ENCODE measurements at regions of chr2 and their contacts with region 1.

Region 1: GRCh38 chr2:46632349-46632748 is 153.0 kb downstream of the TMEM247 start:
- DNase-seq: peak in 1 of 2 experiments; percentile 60
- H3K4me3 ChIP-seq: no peak overlapping the region
- H3K27ac ChIP-seq: no peak overlapping the region
- H3K4me1 ChIP-seq: no peaks in the 10 kb centered on the region
- H3K27me3 ChIP-seq: no peaks in the 10 kb centered on the region
- CTCF ChIP-seq: peak; percentile 85

Region 2: DNA sequence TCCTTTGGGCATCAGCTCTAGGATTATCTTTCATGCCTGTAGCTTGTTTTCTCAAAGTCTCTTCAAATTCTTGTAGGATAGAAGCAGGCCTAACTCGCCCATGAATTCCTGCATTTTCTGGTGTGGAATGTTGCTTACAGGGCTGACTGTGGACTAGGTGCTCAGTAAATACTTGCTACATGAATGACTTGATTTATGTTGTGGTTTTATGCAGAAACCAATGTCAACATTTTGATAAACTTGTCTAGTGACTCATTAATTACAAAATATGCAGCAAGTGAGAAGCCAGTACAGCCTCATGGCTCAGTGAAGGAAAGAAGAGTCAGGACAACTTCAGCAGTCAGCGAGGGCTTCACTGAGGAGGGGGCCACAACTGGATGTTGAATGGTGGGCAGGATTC is 1512.5 kb before region 1 on chr2:
- CTCF ChIA-PET with region 1: no interaction called
- POLR2A ChIA-PET with region 1: no interaction called
- intact Hi-C with region 1: no loop called
- DNase-seq: peak; percentile 67 to 100
- H3K4me3 ChIP-seq: no peak overlapping the region; the same call in 1 of the 2 replicates
- H3K27ac ChIP-seq: peak overlapping the region; percentile 85
- H3K4me1 ChIP-seq: peaks cover 63% of the 10 kb centered on the region
- H3K27me3 ChIP-seq: no peaks in the 10 kb centered on the region
- CTCF ChIP-seq: no peak

Region 3: GRCh38 chr2:46589358-46589757 is 43.0 kb before region 1 on chr2:
- CTCF ChIA-PET with region 1: interaction called, 15 read pairs
- POLR2A ChIA-PET with region 1: no interaction called
- intact Hi-C with region 1: no loop called
- DNase-seq: peak in 1 of 2 experiments; percentile 49
- H3K4me3 ChIP-seq: no peak overlapping the region
- H3K27ac ChIP-seq: no peak overlapping the region
- H3K4me1 ChIP-seq: peaks cover 4% of the 10 kb centered on the region; the same call in 1 of the 2 replicates
- H3K27me3 ChIP-seq: no peaks in the 10 kb centered on the region
- CTCF ChIP-seq: no peak

Region 4: DNA sequence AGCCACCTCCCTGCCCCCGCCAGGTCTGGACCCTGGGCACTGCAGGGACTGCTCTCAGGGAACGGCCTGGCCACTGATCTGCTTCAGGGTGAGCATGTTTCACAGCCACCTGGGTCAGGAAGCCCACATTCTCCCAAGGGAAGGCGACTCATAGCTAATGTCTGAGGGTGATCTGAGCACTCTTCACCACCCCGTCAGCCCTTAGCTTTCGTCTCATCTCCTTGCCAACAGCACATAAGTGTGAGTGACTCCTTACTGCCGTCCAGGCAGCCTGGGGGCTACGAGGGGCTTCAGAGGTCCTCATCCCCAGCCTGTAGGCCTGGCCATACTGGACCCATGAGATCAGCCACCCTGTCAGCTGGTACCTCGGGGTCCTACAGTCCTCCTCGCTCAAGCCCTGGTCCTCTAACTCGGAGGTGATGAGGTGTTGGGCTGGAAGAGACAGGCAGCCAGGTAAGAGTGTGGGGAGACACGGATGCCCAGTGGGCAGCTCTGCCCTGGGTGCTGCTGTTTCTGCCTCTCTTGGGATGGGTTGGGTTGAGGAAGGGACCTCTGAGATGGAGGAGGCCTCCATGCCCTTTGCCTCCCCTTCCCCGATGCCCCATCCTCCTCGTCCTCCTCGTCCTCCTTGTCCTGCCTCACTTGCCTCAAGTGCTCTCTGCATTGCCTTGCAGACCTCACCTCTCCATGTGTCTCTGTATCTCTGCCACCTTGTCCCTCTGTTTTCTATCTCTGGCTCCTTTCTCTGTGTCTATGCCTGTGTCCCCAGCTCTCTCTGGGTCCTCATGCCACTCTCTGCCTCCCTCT is 195.5 kb after region 1 on chr2:
- CTCF ChIA-PET with region 1: no interaction called
- POLR2A ChIA-PET with region 1: no interaction called
- intact Hi-C with region 1: no loop called
- DNase-seq: no peak
- H3K4me3 ChIP-seq: no peak overlapping the region
- H3K27ac ChIP-seq: no peak overlapping the region
- H3K4me1 ChIP-seq: no peaks in the 10 kb centered on the region
- H3K27me3 ChIP-seq: no peaks in the 10 kb centered on the region
- CTCF ChIP-seq: no peak

Region 5: DNA sequence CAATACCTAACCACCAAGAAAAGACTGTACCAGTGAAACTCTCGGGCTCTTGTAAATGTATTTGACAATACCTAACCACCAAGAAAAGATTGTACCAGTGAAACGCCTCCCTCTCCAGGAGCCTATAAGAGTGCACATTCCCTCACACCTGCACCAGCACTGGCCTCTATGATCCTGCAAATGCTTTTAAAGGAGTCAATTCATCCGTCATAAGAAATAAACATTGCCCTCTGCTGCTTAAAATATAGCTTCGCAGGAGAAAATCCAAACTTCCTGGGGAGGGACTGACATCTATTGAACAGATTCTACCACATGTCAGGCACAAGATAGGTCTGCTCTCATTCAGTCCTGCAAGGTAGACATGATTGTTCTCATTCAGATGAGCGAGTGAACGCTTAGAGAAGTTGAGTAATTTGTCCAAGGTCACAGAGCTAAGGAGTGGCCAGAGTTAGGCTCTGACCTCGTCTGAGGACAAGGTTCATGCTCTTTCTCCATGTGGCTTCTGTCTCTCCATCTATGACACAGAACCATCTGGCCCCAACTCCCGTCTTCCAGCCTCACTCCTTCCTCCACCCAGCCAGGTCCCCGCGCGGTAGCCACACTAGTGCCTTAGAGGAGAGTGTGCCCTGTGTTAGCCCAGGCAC is 244.5 kb after region 1 on chr2:
- CTCF ChIA-PET with region 1: no interaction called
- POLR2A ChIA-PET with region 1: no interaction called
- intact Hi-C with region 1: loop called (anchors 1 kb)
- DNase-seq: peak; percentile 46 to 75
- H3K4me3 ChIP-seq: no peak overlapping the region
- H3K27ac ChIP-seq: no peak overlapping the region
- H3K4me1 ChIP-seq: peaks cover 17% of the 10 kb centered on the region
- H3K27me3 ChIP-seq: no peaks in the 10 kb centered on the region
- CTCF ChIP-seq: peak; percentile 75

Region 6: DNA sequence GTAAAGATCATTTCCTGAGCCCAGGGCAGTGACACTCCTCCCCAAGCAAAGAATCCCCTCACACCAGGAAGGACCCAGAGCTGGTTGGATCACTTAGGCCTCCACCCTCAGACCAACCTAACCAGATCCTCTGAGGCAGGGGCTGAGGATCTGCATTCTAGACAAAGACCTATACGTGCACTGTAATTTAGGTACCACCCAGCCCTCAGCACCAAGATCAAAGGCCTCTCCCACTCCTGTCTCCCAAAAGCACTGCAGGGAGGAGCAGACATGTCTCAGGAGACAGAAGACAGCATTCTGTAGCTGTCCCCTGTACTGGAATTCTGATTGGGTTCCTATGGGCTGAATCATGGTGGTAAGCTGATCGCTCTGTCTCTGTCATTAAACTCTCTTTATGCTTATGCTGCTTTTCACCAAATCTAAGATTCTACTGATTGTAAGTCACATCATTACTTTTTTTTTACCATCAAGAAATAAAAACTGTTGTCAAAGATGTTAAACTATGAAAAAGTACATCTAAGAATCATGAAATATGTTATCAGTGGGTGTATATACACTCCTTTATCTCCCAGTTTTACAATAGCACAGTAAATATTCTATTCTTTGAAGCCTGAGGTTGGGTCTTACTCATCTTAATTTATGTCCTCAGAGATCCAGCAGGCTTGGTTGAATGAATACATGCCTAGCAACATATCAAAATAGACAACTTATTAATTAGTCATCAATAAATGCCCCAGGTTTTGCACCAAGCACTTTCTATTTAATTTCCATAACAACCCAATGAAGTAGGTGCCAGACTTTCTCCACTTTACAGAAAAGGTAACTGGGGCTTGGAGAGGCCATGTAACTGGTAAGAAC is 254.9 kb after region 1 on chr2:
- CTCF ChIA-PET with region 1: no interaction called
- POLR2A ChIA-PET with region 1: no interaction called
- intact Hi-C with region 1: loop called (anchors 1 kb)
- DNase-seq: peak; percentile 30 to 49
- H3K4me3 ChIP-seq: no peak overlapping the region
- H3K27ac ChIP-seq: no peak overlapping the region
- H3K4me1 ChIP-seq: peaks cover 13% of the 10 kb centered on the region
- H3K27me3 ChIP-seq: no peaks in the 10 kb centered on the region
- CTCF ChIP-seq: no peak

Region 7: DNA sequence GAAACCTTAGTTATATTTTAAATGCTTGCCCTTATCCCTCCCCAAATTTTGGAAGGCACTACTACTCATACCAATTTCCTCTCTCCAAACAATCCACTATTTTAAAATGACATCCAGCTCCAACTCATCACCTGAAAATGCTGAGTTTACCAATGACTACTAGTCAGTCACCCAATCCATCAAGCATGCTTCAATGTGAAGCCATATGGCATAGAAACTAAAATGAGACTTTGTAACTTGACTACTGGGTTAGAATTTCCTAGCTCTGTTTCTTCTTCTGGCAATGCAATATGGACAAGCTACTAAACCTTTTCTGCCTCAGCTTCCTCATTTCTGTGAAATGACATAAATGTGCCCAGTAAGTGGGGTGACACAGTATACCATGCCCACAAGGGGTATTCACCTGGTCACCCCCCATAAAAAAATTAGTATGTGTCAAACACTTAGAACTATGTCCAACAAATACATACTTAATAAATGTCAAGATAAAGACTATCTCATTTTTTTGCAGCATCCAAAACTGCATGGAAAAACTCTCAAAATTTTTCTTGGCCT is 532.7 kb after region 1 on chr2:
- CTCF ChIA-PET with region 1: no interaction called
- POLR2A ChIA-PET with region 1: no interaction called
- intact Hi-C with region 1: loop called (anchors 5 kb)
- DNase-seq: peak in 1 of 2 experiments; percentile 32
- H3K4me3 ChIP-seq: no peak overlapping the region
- H3K27ac ChIP-seq: no peak overlapping the region
- H3K4me1 ChIP-seq: peaks cover 42% of the 10 kb centered on the region
- H3K27me3 ChIP-seq: no peaks in the 10 kb centered on the region
- CTCF ChIP-seq: no peak

Measured in PC-9 (cell line).